Activated B cell treated with CpG ODN at 0.5 μM for 24 hours (primary cell): ENCODE measurements at regions of chr1 and their contacts with region 1.

Region 1: GRCh38 chr1:207897188-207897587 is 13.7 kb downstream of the CD34 start:
- DNase-seq: no peak
- ATAC-seq: no peak
- H3K4me3 Mint-ChIP-seq: no peak overlapping the region
- H3K27ac Mint-ChIP-seq: no peak overlapping the region
- H3K4me1 Mint-ChIP-seq: peaks cover 8% of the 10 kb centered on the region
- H3K27me3 Mint-ChIP-seq: peaks cover 2% of the 10 kb centered on the region
- CTCF ChIP-seq: no peak

Region 2: GRCh38 chr1:207935166-207935583 is 38.0 kb after region 1 on chr1:
- CTCF ChIA-PET with region 1: no interaction called
- POLR2A ChIA-PET with region 1: no interaction called
- intact Hi-C with region 1: no loop called
- DNase-seq: no peak
- ATAC-seq: no peak
- H3K4me3 Mint-ChIP-seq: no peak overlapping the region
- H3K27ac Mint-ChIP-seq: no peak overlapping the region
- H3K4me1 Mint-ChIP-seq: peaks cover 4% of the 10 kb centered on the region
- H3K27me3 Mint-ChIP-seq: no peaks in the 10 kb centered on the region
- CTCF ChIP-seq: no peak

Region 3: DNA sequence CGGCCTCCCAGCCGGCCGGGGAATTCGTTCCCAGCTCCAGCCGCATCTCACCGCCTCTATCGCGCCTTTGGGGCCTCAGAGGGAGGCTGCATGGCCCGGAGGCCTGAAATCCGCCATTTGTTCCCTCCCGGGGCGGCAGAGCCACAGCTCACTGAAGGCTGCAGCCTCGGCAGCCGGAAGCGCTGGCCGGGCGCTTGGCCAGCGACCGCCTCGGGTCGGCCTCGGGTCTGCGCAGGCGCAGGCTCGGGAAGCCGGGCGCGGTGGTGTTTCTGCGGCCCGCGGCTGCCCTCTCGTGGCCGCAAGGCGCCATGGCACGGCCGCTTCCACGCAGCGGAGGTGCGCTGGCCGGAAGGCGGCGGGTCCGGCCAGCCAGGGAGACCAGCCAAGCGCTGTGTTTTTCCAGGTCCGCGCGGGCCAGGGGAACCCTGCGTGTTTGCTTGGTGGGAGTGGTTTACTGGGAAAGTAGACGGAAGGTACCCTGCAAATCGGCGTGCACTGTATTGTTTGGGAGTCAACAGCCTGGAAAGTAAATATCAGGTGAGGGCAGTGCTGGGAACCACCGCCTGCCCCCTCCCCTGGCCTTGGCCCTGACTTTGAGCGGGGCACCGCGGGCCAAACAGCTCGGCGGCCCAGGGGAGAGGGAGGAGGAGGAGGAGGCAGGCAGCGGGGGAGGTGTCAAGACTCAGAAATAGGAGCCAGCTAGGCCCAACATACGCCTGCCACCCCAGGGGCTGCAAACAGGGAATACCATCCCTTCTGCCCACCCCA is 66.4 kb after region 1 on chr1:
- CTCF ChIA-PET with region 1: interaction called, 10 read pairs
- POLR2A ChIA-PET with region 1: no interaction called
- intact Hi-C with region 1: loop called (anchors 1 kb)
- DNase-seq: peak; percentile 89
- ATAC-seq: peak; percentile 95
- H3K4me3 Mint-ChIP-seq: peak overlapping the region; percentile 87
- H3K27ac Mint-ChIP-seq: no peak overlapping the region
- H3K4me1 Mint-ChIP-seq: peaks cover 17% of the 10 kb centered on the region
- H3K27me3 Mint-ChIP-seq: peaks cover 28% of the 10 kb centered on the region
- CTCF ChIP-seq: peak; percentile 54